PC-9 (cell line): ENCODE measurements at regions of chr2 and their contacts with region 1.

Region 1: DNA sequence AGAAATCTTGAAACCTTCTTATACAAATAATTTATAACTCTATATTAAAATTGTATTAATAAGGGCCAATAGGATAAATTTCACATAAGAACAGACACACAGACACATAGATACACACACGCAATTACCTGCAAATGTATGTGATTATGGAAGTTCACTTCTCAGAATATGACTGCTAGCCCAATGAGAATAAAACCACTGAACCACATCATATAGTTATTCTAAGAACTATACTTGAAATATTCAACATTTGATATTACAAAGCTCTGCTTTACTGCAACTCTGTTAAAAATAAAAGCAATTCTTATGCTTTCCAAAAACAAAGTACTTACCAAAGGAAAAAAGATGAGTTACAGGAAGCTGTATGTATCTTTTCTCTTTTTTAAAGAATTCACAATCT is 51.1 kb downstream of the PGAP1 start:
- DNase-seq: no peak
- H3K4me3 ChIP-seq: no peak overlapping the region
- H3K27ac ChIP-seq: no peak overlapping the region
- H3K4me1 ChIP-seq: no peaks in the 10 kb centered on the region
- H3K27me3 ChIP-seq: no peaks in the 10 kb centered on the region
- CTCF ChIP-seq: no peak

Region 2: DNA sequence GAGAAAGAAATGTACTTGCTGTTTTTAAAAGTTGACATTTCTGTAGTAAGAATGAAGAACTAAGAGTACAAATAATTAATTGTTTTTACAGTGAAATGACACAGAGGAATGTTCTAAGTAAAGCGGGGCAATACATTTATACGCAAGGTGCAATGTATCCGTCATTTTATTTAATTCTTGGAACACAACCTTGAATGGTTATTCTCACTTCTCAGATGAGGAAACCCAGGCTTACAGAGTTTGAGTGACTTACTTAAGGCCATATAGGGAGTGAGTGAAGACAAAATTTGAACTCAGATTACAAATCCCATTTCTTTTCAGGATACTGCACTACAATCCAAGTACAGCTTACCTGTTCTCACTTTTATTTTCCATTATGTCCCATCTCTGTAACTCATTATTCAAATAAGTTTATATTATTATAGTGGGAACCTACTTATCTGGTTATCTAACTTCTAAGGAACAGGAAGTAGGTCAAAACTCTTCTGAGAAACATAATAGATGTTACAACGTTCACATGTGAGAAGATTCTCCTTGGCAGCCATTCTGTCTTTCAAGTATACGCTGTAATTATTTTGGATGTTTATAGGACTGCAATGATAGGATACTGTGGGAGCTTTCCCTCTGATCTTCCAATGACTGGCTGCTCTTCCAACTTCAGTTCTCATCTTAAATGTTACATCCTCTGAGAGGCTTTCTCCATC is 691.7 kb before region 1 on chr2:
- CTCF ChIA-PET with region 1: no interaction called
- POLR2A ChIA-PET with region 1: interaction called, 27 read pairs
- intact Hi-C with region 1: no loop called
- DNase-seq: no peak
- H3K4me3 ChIP-seq: no peak overlapping the region
- H3K27ac ChIP-seq: no peak overlapping the region
- H3K4me1 ChIP-seq: no peaks in the 10 kb centered on the region
- H3K27me3 ChIP-seq: no peaks in the 10 kb centered on the region
- CTCF ChIP-seq: no peak